GM12878 (cell line): ENCODE measurements at regions of chr14 and their contacts with region 1.

Region 1: DNA sequence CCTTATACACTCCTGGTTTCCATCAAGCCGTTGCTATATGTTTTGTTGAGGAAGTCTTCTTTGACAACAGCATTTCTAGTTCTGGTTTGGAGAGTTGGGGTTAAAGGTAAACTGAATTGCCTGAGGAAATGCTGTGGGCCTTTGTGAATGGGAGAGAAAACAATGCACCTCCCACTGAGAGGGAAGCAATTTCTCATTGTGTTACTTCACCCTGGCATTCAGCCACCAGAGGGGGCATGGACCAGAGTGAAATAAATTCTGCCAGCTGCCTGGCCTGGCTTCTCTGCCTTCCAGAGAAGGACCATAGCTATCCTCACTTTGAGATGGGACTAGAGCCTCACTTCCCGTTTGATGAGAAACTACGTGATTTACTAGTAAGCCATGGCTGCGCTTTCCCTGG is 475.3 kb downstream of the EGLN3 start:
- DNase-seq: no peak
- ATAC-seq: peak; percentile 77
- H3K4me3 ChIP-seq: no peak overlapping the region
- H3K27ac ChIP-seq: no peak overlapping the region
- H3K4me1 ChIP-seq: no peaks in the 10 kb centered on the region
- H3K27me3 ChIP-seq: no peaks in the 10 kb centered on the region
- CTCF ChIP-seq: peak; percentile 40 to 56 (median 46); a peak in 5 of 6 replicates
- EP300 ChIP-seq: no peak
- POLR2A ChIP-seq: no peak
- RAD21 ChIP-seq: peak; percentile 35; the same call in 1 of the 2 replicates

Region 2: GRCh38 chr14:33490555-33490954 is 14.9 kb after region 1 on chr14:
- CTCF ChIA-PET with region 1: interaction called, 12 read pairs
- POLR2A ChIA-PET with region 1: interaction called, 10 read pairs
- RAD21 ChIA-PET with region 1: interaction called, 6 read pairs
- SMC1A ChIA-PET with region 1: interaction called, 34 read pairs
- in situ Hi-C with region 1: no loop called
- intact Hi-C with region 1: no loop called
- DNase-seq: no peak
- ATAC-seq: no peak
- H3K4me3 ChIP-seq: no peak overlapping the region
- H3K27ac ChIP-seq: no peak overlapping the region
- H3K4me1 ChIP-seq: no peaks in the 10 kb centered on the region
- H3K27me3 ChIP-seq: no peaks in the 10 kb centered on the region; a peak in 1 of 4 replicates
- CTCF ChIP-seq: no peak
- EP300 ChIP-seq: no peak
- POLR2A ChIP-seq: no peak
- RAD21 ChIP-seq: no peak

Region 3: DNA sequence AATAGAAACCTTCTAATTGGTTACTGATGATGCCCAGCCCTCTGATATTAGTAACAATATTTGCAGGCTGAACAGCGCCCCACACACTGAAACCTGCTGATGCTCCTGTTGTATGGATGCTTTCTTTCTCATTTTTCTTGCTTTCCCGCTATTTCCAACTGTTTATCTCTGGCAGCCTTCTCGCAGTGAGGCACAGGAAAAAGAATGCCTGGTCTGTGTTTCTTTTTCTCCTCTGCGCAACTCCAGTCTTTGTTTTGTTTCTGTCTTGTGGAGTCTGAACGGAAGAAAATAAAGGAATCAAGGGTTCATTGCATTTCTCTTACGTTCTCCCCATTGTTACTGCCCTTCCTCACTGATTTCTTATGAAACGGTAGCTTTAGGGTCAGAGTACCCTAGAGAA is 24.1 kb after region 1 on chr14:
- CTCF ChIA-PET with region 1: interaction called, 23 read pairs
- POLR2A ChIA-PET with region 1: no interaction called
- RAD21 ChIA-PET with region 1: interaction called, 19 read pairs
- SMC1A ChIA-PET with region 1: interaction called, 51 read pairs
- in situ Hi-C with region 1: no loop called
- intact Hi-C with region 1: no loop called
- DNase-seq: no peak
- ATAC-seq: no peak
- H3K4me3 ChIP-seq: no peak overlapping the region
- H3K27ac ChIP-seq: no peak overlapping the region
- H3K4me1 ChIP-seq: no peaks in the 10 kb centered on the region
- H3K27me3 ChIP-seq: no peaks in the 10 kb centered on the region; a peak in 1 of 4 replicates
- CTCF ChIP-seq: no peak
- EP300 ChIP-seq: no peak
- POLR2A ChIP-seq: no peak
- RAD21 ChIP-seq: no peak

Region 4: GRCh38 chr14:34300882-34301734 is 825.5 kb after region 1 on chr14:
- CTCF ChIA-PET with region 1: interaction called, 3 read pairs
- POLR2A ChIA-PET with region 1: no interaction called
- RAD21 ChIA-PET with region 1: no interaction called
- SMC1A ChIA-PET with region 1: interaction called, 3 read pairs
- in situ Hi-C with region 1: no loop called
- intact Hi-C with region 1: loop called (anchors 10 kb)
- DNase-seq: peak; percentile 7
- ATAC-seq: peak; percentile 67
- H3K4me3 ChIP-seq: no peak overlapping the region
- H3K27ac ChIP-seq: no peak overlapping the region
- H3K4me1 ChIP-seq: no peaks in the 10 kb centered on the region
- H3K27me3 ChIP-seq: no peaks in the 10 kb centered on the region
- CTCF ChIP-seq: peak; percentile 51 to 59 (median 56); a peak in 5 of 6 replicates
- EP300 ChIP-seq: no peak
- POLR2A ChIP-seq: no peak
- RAD21 ChIP-seq: peak; percentile 62